ENCODE measurements at regions of chr19 and their contacts with region 1.

Region 1: DNA sequence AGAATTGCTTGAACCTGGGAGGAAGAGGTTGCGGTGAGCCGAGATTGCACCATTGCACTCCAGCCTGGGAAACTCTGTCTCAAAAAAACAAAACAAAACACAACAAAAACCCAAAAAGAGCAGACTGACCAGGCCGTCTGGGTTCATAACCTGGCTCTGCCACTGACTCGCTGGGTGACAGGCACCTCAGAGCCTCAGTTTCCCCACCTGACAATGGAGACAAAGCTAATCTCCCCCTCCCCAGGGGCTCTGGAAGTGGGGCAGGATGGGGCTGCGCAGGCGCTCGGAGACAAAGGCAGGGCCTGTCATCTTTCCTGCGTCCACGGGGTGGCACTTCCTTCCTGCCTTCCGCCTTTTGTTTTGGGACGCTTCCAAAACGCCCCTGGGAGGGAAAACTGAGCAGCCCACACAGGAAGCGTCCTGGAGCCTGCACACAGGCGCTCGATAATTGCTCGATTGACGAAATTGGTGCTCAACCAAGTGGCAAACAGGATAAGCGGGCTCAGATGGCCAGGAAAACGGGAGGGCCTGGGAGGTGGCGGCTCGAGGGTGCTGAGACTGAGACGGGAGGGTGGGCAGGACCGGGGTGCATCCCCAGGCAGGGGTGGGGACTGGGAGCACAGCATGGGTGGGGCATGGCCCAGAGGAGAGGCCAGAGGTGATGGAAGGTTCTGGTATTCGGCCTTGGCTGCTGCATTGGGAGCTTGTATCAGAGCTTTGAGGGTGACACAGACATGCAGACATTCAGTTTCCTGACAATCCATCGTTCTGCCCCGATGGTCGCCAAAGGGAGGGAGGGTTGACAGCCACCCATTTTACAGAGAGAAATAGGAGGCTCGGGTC is 17.8 kb downstream of the SPC24 start:
- DNase-seq: peak; percentile 84
- ATAC-seq: peak; percentile 27
- H3K4me3 ChIP-seq: peak overlapping the region; percentile 12; the same call in 1 of the 2 replicates
- H3K27ac ChIP-seq: peak overlapping the region; percentile 97
- H3K4me1 ChIP-seq: peaks cover 26% of the 10 kb centered on the region
- H3K27me3 ChIP-seq: no peaks in the 10 kb centered on the region
- CTCF ChIP-seq: peak; percentile 89
- POLR2A ChIP-seq: peak; percentile 42; the same call in 1 of the 2 replicates
- RAD21 ChIP-seq: peak; percentile 93

Region 2: GRCh38 chr19:10363789-10364281 is 773.9 kb before region 1 on chr19:
- CTCF ChIA-PET with region 1: no interaction called
- POLR2A ChIA-PET with region 1: no interaction called
- dilution Hi-C with region 1: no loop called
- in situ Hi-C with region 1: no loop called
- intact Hi-C with region 1: no loop called
- DNase-seq: no peak
- ATAC-seq: no peak
- H3K4me3 ChIP-seq: no peak overlapping the region
- H3K27ac ChIP-seq: no peak overlapping the region
- H3K4me1 ChIP-seq: no peaks in the 10 kb centered on the region
- H3K27me3 ChIP-seq: no peaks in the 10 kb centered on the region
- CTCF ChIP-seq: no peak
- POLR2A ChIP-seq: no peak
- RAD21 ChIP-seq: no peak

Region 3: DNA sequence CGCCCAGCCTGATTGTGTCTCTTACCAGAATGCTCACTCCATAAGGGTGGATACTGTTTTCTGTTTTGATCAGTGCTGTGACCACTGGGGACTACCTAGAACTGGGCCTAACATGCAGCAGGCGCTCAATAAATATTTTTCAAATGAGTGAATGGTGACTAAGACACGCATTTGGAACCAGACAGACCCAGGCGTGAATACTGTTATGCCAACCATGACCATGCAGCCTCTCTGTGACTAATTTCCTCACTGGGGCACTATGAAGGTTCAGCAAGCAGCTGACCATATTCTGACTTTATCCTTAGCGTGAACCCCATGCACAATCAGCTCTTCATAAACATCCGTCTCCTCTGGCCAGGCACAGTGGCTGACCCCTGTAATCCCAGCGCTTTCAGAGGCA is 30.8 kb after region 1 on chr19:
- CTCF ChIA-PET with region 1: interaction called, 4 read pairs
- POLR2A ChIA-PET with region 1: interaction called, 3 read pairs
- dilution Hi-C with region 1: no loop called
- in situ Hi-C with region 1: no loop called
- intact Hi-C with region 1: loop called (anchors 2 kb)
- DNase-seq: peak; percentile 97
- ATAC-seq: peak; percentile 87
- H3K4me3 ChIP-seq: no peak overlapping the region
- H3K27ac ChIP-seq: peak overlapping the region; percentile 67
- H3K4me1 ChIP-seq: peaks cover 9% of the 10 kb centered on the region
- H3K27me3 ChIP-seq: no peaks in the 10 kb centered on the region
- CTCF ChIP-seq: no peak
- POLR2A ChIP-seq: no peak
- RAD21 ChIP-seq: peak; percentile 36

Region 4: GRCh38 chr19:11203194-11204075 is 65.7 kb after region 1 on chr19:
- CTCF ChIA-PET with region 1: interaction called, 4 read pairs
- POLR2A ChIA-PET with region 1: no interaction called
- dilution Hi-C with region 1: no loop called
- in situ Hi-C with region 1: loop called (anchors 5 kb)
- intact Hi-C with region 1: loop called (anchors 1 kb)
- DNase-seq: peak; percentile 71
- ATAC-seq: peak; percentile 80
- H3K4me3 ChIP-seq: no peak overlapping the region
- H3K27ac ChIP-seq: peak overlapping the region; percentile 89
- H3K4me1 ChIP-seq: peaks cover 13% of the 10 kb centered on the region
- H3K27me3 ChIP-seq: no peaks in the 10 kb centered on the region
- CTCF ChIP-seq: peak; percentile 84
- POLR2A ChIP-seq: no peak
- RAD21 ChIP-seq: peak; percentile 86

Region 5: GRCh38 chr19:11208561-11209471 is 71.1 kb after region 1 on chr19:
- CTCF ChIA-PET with region 1: interaction called, 4 read pairs
- POLR2A ChIA-PET with region 1: interaction called, 13 read pairs
- dilution Hi-C with region 1: no loop called
- in situ Hi-C with region 1: loop called (anchors 5 kb)
- intact Hi-C with region 1: no loop called
- DNase-seq: no peak
- ATAC-seq: no peak
- H3K4me3 ChIP-seq: no peak overlapping the region
- H3K27ac ChIP-seq: no peak overlapping the region
- H3K4me1 ChIP-seq: no peaks in the 10 kb centered on the region
- H3K27me3 ChIP-seq: no peaks in the 10 kb centered on the region
- CTCF ChIP-seq: no peak
- POLR2A ChIP-seq: no peak
- RAD21 ChIP-seq: no peak

Region 6: GRCh38 chr19:11261941-11262839 is 124.4 kb after region 1 on chr19 and contains the start of gene DOCK6:
- CTCF ChIA-PET with region 1: no interaction called
- POLR2A ChIA-PET with region 1: no interaction called
- dilution Hi-C with region 1: no loop called
- in situ Hi-C with region 1: no loop called
- intact Hi-C with region 1: loop called (anchors 1 kb)
- DNase-seq: no peak
- ATAC-seq: peak; percentile 94
- H3K4me3 ChIP-seq: peak within 1 kb of the TSS; percentile 97
- H3K27ac ChIP-seq: peak within 1 kb of the TSS; percentile 66
- H3K4me1 ChIP-seq: peaks cover 5% of the 10 kb centered on the region
- H3K27me3 ChIP-seq: no peaks in the 10 kb centered on the region; the same call in 1 of the 2 replicates
- CTCF ChIP-seq: peak; percentile 38
- POLR2A ChIP-seq: no peak
- RAD21 ChIP-seq: no peak
- total RNA-seq, gene DOCK6: 4.4 and 5.0 TPM in 2 replicates

Region 7: DNA sequence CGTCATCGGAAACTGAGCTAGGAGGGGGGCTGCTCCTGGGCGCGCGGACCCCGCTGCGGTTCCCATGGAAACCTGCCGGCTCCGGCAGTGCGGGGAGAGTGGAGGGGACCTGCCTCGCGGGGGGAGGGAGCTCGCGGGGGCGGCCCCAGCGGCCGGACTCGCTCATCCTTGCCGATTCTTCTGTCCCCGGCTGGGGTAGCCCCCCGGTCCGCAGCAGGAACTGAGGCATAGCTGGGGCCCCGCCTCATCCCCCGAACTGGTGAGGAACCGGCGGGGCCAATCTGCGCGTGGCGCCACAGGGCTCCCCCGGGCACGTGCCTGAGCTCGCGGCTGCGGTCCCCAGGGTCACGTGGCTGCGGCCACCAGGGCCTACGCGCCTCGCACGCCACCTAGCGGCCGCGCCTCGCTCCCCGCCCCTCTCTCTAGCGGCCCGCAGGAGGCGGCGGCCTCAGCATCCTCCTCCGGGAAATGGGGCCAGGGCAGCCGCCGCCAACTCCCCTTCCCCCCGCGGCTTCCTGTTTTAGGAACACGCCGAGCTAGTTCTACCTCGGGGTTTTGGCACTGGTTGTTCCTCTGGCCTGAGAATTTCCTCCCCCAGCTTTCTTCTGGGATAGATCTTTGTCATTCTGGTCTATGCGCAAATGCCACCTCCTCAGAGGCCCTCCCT is 344.8 kb after region 1 on chr19:
- CTCF ChIA-PET with region 1: no interaction called
- POLR2A ChIA-PET with region 1: no interaction called
- dilution Hi-C with region 1: no loop called
- in situ Hi-C with region 1: no loop called
- intact Hi-C with region 1: loop called (anchors 5 kb)
- DNase-seq: peak; percentile 72
- ATAC-seq: peak; percentile 83
- H3K4me3 ChIP-seq: peak overlapping the region; percentile 49
- H3K27ac ChIP-seq: no peak overlapping the region
- H3K4me1 ChIP-seq: peaks cover 2% of the 10 kb centered on the region; the same call in 1 of the 2 replicates
- H3K27me3 ChIP-seq: peaks cover 42% of the 10 kb centered on the region
- CTCF ChIP-seq: peak; percentile 97
- POLR2A ChIP-seq: no peak
- RAD21 ChIP-seq: peak; percentile 81

Measured in IMR-90 (cell line).